ENCODE measurements at regions of chr1 and their contacts with region 1.

Region 1: GRCh38 chr1:226736908-226737818 is 1.9 kb downstream of the ITPKB start:
- DNase-seq: peak; percentile 92
- H3K4me3 ChIP-seq: peak overlapping the region; percentile 71 to 98 (median 96)
- H3K27ac ChIP-seq: peak overlapping the region; percentile 88 to 97 (median 92)
- H3K4me1 ChIP-seq: peaks cover 41 to 77% (median 72%) of the 10 kb centered on the region in 6 donors
- H3K27me3 ChIP-seq: no peaks in the 10 kb centered on the region
- CTCF ChIP-seq: peak in 6 of 11 experiments; percentile 11 to 45 (median 26)
- POLR2A ChIP-seq: peak in 1 of 3 donors; percentile 19

Region 2: GRCh38 chr1:226649780-226650179 is 87.4 kb before region 1 on chr1:
- intact Hi-C with region 1: loop called (anchors 10 kb)
- DNase-seq: peak; percentile 71
- H3K4me3 ChIP-seq: no peak overlapping the region
- H3K27ac ChIP-seq: peak overlapping the region in 1 of 8 donors; percentile 25
- H3K4me1 ChIP-seq: peaks cover 6 to 32% (median 17%) of the 10 kb centered on the region in 6 donors
- H3K27me3 ChIP-seq: no peaks in the 10 kb centered on the region
- CTCF ChIP-seq: peak in 4 of 11 experiments; percentile 21 to 38 (median 34)
- POLR2A ChIP-seq: no peak

Region 3: DNA sequence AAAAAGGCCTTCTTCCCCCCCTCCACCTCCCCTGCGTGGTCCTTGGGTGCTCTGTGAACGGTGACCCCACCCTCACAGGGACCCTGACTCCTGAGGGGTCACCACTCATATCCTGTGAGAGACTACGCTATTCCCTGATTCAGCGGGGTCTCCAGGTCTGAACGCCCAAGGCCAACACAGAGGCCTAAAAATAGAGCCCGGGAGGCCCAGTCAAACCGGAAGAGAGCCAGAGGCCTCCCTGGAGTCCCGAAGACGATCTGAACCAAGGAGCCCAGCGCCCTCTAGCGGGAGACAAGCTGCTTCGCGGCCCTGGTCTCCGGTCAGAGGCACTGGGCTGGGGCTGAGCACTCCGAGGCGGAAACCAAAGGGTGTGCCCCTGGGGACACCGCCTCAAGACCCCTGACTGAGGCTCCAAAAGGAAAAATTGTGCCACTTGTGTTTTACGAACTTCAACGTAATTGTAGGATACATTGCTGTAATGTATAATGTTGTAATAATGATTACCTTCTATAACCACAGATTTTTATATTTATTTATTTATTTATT is 90.9 kb after region 1 on chr1:
- intact Hi-C with region 1: loop called (anchors 5 kb)
- DNase-seq: peak; percentile 99
- H3K4me3 ChIP-seq: peak overlapping the region in 2 of 8 donors; percentile 8 to 22
- H3K27ac ChIP-seq: peak overlapping the region; percentile 57 to 83 (median 78)
- H3K4me1 ChIP-seq: peaks cover 5 to 22% (median 17%) of the 10 kb centered on the region in 6 donors
- H3K27me3 ChIP-seq: no peaks in the 10 kb centered on the region
- CTCF ChIP-seq: peak; percentile 91 to 98 (median 96)
- POLR2A ChIP-seq: no peak

Measured in spleen (tissue), 13 donors.